Dorsolateral prefrontal cortex (tissue), 120 donors: ENCODE measurements at regions of chr14 and their contacts with region 1.

Region 1: GRCh38 chr14:32252030-32252670 is 49.1 kb upstream of the RNU6-8 start:
- DNase-seq: peak in 4 of 10 donors; percentile 22 to 73 (median 50)
- H3K4me3 ChIP-seq: peak overlapping the region in 7 of 59 donors; percentile 5 to 31 (median 8)
- H3K27ac ChIP-seq: peak overlapping the region in 45 of 59 donors; percentile 1 to 79 (median 56)
- H3K27me3 ChIP-seq: no peaks in the 10 kb centered on the region
- CTCF ChIP-seq: peak; percentile 54 to 98 (median 88)

Region 2: DNA sequence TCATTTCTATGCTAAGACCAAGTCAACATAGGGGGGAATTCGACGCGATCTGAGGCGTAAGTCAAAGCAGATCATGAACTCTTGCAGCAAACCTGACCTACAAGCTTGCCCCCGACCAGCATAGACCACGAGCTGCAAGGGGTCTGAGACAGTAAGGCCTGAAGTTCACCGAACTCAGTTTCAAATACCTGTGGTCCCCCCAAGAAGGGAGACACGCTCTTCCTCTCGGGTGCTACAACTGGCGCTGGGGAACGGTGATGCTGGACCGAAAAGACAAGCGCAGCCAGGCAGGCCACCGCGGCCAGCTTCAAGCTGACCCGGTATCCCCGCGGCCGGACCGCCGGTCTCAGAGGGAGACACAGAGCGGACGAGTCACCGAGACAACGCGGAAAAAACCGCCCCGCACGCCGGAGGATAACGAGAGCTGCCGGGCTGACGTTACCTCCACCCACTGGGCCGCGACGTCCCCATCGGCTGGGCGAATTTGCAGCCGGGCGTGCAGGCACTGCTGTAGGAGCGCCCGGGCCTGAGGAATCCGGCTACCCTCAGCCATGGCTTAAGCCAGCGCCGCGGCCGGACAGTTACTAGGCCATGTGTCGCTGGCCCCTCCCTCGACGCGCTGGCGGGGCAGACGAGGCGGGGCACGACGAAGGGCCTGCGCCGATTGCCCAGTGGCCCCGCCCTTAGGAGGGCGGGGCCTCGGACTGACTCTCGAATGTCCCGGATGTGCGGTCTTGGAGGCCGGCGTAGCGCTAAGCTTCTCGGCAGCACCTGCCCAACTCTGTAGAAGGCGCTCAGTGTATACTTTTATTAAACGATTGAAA is 795.1 kb before region 1 on chr14 and contains the start of gene DTD2:
- intact Hi-C with region 1: loop called in 1 of 2 experiments (anchors 5 kb)
- DNase-seq: peak; percentile 94 to 97 (median 96)
- H3K4me3 ChIP-seq: peak within 1 kb of the TSS; percentile 56 to 98 (median 82)
- H3K27ac ChIP-seq: peak within 1 kb of the TSS; percentile 70 to 98 (median 93)
- H3K27me3 ChIP-seq: no peaks in the 10 kb centered on the region
- CTCF ChIP-seq: peak in 38 of 56 donors; percentile 4 to 59 (median 28)
- total RNA-seq, gene DTD2: 11.4 to 33.1 (median 22.2) TPM

Region 3: GRCh38 chr14:31926123-31926522 is 326.0 kb before region 1 on chr14:
- intact Hi-C with region 1: loop called (anchors 5 to 10 kb)
- DNase-seq: no peak
- H3K4me3 ChIP-seq: no peak overlapping the region
- H3K27ac ChIP-seq: peak overlapping the region in 38 of 59 donors; percentile 3 to 87 (median 54)
- H3K27me3 ChIP-seq: no peaks in the 10 kb centered on the region
- CTCF ChIP-seq: peak; percentile 19 to 71 (median 51)

Region 4: DNA sequence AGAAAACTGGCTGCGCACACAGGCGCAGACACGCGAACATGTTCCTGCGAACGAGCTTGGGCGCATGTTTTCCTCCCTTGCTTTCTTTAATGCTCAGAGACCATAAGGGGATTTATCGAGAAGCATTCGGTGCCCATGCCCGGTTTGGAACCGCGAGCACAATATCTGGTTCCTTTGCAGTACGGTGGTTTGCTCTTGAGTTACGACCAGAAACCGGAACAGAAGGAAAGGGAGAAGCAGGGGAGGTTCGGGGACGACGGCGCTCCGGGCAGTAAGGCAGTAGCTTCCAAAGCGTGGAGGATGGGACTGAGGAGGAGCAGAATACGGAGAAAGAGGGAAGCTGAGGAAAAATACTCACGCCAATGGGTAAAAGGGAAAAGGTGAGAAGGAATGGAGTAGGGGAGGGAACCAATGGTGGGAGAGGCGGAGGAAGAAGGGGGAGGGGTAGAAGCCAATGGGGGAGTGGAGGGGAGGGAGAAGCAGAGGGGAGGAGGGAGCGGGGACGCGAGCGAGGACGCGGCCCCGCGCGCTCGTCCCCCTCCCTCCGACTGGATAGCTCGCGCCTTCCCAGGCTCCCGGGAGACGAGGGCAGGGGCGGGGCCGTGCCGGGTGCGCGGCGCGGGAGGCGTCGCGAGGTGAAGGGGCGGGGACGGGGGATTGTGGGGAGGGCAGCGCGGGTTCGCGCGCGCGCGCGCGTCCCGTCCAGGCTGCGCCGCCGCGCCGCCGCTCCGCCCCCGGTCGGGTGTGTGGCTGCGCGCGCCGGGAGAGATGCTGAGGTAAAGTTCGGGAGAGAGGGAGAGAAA is 175.7 kb before region 1 on chr14:
- intact Hi-C with region 1: loop called (anchors 2 kb)
- DNase-seq: peak; percentile 86 to 97 (median 94)
- H3K4me3 ChIP-seq: peak overlapping the region; percentile 77 to 99 (median 92)
- H3K27ac ChIP-seq: peak overlapping the region; percentile 92 to 100 (median 99)
- H3K27me3 ChIP-seq: no peaks in the 10 kb centered on the region
- CTCF ChIP-seq: peak in 2 of 56 donors; percentile 6 to 8

Region 5: GRCh38 chr14:32217301-32217700 is 34.8 kb before region 1 on chr14:
- intact Hi-C with region 1: no loop called
- DNase-seq: no peak
- H3K4me3 ChIP-seq: no peak overlapping the region
- H3K27ac ChIP-seq: no peak overlapping the region
- H3K27me3 ChIP-seq: no peaks in the 10 kb centered on the region
- CTCF ChIP-seq: no peak

Region 6: GRCh38 chr14:32366256-32366879 is 114.2 kb after region 1 on chr14:
- intact Hi-C with region 1: loop called (anchors 2 to 10 kb)
- DNase-seq: peak in 9 of 10 donors; percentile 22 to 74 (median 60)
- H3K4me3 ChIP-seq: peak overlapping the region in 20 of 59 donors; percentile 0 to 44 (median 14)
- H3K27ac ChIP-seq: peak overlapping the region; percentile 54 to 96 (median 88)
- H3K27me3 ChIP-seq: no peaks in the 10 kb centered on the region
- CTCF ChIP-seq: peak in 50 of 56 donors; percentile 13 to 75 (median 53)

Region 7: DNA sequence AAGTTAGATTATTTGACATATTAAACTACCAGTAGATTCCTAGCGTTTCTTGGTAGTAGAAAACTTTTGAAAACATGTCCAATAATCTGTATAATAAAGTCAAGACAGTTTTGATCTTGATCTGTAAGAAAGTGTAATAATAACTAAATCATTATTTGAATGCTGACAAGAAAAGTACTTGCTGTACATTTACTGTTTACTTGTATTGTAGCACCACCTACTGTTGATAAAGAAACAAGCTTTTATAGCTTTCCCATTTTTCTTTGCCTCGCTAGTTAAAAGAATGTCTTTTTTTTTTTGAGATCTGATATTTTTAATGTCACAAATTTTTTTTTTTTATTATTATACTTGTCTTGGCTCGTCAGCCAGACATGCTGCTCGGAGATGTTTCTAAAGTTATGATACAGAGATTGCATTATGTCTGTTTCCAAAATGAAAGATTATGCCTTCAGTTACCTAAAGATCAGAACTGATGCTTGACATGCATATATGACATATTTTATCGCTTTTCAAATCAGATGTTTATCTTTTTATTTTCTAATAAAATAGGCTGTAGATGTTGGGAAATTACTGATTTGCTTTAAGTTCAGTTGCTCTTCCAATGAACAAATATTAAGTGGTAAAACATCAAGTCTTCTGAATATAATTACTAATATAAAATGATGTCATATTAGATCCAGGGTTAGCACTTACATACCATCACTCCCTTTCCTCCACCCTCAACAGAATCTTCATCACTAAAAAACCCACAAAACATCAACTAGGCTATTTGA is 217.4 kb after region 1 on chr14:
- intact Hi-C with region 1: loop called (anchors 5 kb)
- DNase-seq: no peak
- H3K4me3 ChIP-seq: peak overlapping the region in 3 of 59 donors; percentile 24 to 31 (median 25)
- H3K27ac ChIP-seq: peak overlapping the region; percentile 86 to 99 (median 96)
- H3K27me3 ChIP-seq: no peaks in the 10 kb centered on the region
- CTCF ChIP-seq: peak; percentile 39 to 91 (median 74)

Region 8: DNA sequence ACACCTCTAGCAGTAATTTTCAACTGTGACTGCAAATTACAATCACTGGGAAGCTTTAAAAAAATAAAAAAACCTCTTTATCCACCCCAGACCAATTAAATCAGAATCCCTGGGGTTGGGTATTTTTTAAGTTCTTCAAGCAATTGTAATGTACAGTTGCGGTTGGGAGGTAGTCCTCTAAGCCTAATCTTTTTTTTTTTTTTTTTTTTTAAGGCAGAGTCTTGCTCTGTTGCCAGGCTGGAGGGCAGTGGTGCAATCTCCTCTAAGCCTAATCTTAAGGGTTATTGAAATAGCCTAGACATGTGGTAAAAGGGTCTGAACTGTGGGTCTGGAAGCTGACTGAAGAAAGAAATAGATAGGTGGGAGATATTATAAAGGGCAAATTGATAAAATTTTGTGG is 307.4 kb after region 1 on chr14:
- intact Hi-C with region 1: loop called (anchors 5 to 10 kb)
- DNase-seq: no peak
- H3K4me3 ChIP-seq: no peak overlapping the region
- H3K27ac ChIP-seq: peak overlapping the region in 48 of 59 donors; percentile 2 to 84 (median 59)
- H3K27me3 ChIP-seq: no peaks in the 10 kb centered on the region
- CTCF ChIP-seq: no peak